Activated naive CD4-positive, alpha-beta T cell treated with anti-CD3 and anti-CD28 coated beads, Interleukin-2, amount 10 ng/mL, durations not matched to agents 7 days and 5 days (primary cell): ENCODE measurements at regions of chr18 and their contacts with region 1.

Region 1: DNA sequence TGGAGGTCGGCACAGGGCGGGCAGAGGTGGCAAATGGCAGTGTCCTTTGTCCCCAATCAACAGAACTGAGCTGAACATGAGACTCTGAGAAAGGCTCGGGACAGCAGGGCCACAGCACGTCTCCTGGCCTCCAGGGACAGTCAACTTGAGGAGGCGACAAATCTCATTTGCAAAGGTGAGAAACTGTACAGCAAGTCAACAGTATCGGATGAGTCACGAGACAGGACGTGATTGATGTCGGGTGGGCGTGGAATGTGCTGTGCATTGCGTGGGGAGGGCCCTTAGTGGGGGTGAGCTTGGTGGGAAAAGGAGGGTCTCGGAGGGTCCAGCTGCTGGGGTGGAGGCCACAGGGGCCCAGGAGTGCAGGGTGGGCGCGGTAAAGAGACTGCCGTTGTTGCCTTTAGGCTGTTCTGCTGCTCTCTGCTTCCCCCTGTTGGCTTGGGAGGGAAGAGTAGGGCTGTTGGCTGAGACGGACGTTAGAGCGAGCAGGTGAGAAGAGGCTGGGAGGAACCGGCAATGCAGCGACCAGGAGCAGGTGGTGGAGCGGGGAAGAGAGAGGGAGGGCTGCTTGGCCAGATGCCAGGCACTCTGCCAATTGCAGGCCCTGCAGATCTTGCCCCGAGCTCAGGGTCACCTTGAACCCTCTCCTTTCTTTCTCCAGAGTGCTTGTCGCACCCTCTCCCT is 164.3 kb downstream of the BCL2 start:
- DNase-seq: peak; percentile 89
- H3K4me3 Mint-ChIP-seq: peak overlapping the region; percentile 78
- H3K27ac Mint-ChIP-seq: peak overlapping the region; percentile 93
- H3K4me1 Mint-ChIP-seq: peaks cover 99% of the 10 kb centered on the region
- H3K27me3 Mint-ChIP-seq: no peaks in the 10 kb centered on the region

Region 2: GRCh38 chr18:63131106-63131958 is 24.0 kb before region 1 on chr18:
- CTCF ChIA-PET with region 1: interaction called, 43 read pairs
- DNase-seq: peak; percentile 72
- H3K4me3 Mint-ChIP-seq: no peak overlapping the region
- H3K27ac Mint-ChIP-seq: peak overlapping the region; percentile 62
- H3K4me1 Mint-ChIP-seq: peaks cover 49% of the 10 kb centered on the region
- H3K27me3 Mint-ChIP-seq: no peaks in the 10 kb centered on the region

Region 3: DNA sequence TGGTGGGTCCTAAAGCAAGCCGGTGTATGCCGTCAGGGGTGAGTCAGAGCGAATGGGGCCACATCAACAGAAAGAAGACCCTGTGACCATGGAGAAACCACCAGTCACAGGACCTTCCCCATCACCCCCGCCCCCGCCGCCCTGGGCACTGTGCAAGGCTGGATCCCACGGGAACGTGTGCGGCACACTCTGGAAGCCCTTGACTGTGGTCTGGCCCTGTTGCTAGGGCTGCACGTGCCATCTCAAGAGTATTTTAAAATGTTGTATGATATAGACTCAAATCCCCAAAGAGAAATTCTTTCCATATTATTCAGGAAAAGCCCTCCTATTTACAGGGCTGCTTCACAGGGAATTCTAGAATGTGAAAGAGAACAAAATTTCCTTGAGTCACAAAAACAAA is 10.6 kb before region 1 on chr18:
- CTCF ChIA-PET with region 1: interaction called, 10 read pairs
- DNase-seq: no peak
- H3K4me3 Mint-ChIP-seq: no peak overlapping the region
- H3K27ac Mint-ChIP-seq: no peak overlapping the region
- H3K4me1 Mint-ChIP-seq: peaks cover 49% of the 10 kb centered on the region
- H3K27me3 Mint-ChIP-seq: no peaks in the 10 kb centered on the region

Region 4: GRCh38 chr18:63329431-63330145 is 174.3 kb after region 1 on chr18:
- CTCF ChIA-PET with region 1: no interaction called
- DNase-seq: no peak
- H3K4me3 Mint-ChIP-seq: no peak overlapping the region
- H3K27ac Mint-ChIP-seq: no peak overlapping the region
- H3K4me1 Mint-ChIP-seq: no peaks in the 10 kb centered on the region
- H3K27me3 Mint-ChIP-seq: no peaks in the 10 kb centered on the region